Panc1 (cell line): ENCODE measurements at regions of chr17 and their contacts with region 1.

Region 1: DNA sequence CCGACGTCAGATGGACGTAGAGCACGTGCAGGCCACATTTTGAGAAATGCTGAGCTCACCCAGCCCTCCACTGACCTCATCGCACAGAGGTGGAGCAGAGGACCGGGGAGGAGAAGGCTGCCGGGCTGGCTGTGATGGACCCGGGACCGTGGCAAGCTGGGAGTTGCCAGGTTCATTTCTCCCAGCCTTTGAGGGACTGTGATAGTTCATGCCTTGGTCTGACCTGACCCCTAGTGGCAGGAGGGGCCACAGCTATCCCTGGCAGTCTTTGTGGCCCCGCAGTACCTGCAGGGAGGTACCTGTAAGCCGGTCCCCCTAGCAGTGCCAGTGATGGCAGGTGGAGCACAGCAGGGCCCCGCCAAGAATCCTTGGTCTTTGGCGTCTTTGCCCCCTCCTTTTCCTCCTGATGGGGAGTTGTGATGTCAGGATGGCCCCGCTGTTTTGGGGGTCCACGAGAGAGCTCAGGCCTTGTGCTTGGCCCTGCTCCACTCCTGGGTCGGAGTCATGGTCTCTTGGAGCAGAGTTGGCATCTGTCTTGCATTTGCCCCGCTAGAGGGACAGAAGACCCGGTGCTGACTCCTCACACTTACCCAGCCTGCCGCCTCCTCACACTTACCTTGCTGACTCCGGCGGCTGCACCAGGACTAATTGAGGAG is 50.4 kb downstream of the OR1D5 start:
- DNase-seq: peak; percentile 45
- ATAC-seq: peak; percentile 97
- H3K4me3 ChIP-seq: no peak overlapping the region
- H3K27ac ChIP-seq: no peak overlapping the region
- H3K4me1 ChIP-seq: no peaks in the 10 kb centered on the region
- H3K27me3 ChIP-seq: no peaks in the 10 kb centered on the region
- CTCF ChIP-seq: peak; percentile 87

Region 2: GRCh38 chr17:2712300-2713043 is 300.6 kb before region 1 on chr17:
- CTCF ChIA-PET with region 1: interaction called, 13 read pairs
- POLR2A ChIA-PET with region 1: no interaction called
- in situ Hi-C with region 1: no loop called
- intact Hi-C with region 1: no loop called
- DNase-seq: no peak
- ATAC-seq: peak; percentile 9; the same call in 1 of the 2 replicates
- H3K4me3 ChIP-seq: peak overlapping the region; percentile 69 to 82
- H3K27ac ChIP-seq: peak overlapping the region; percentile 92
- H3K4me1 ChIP-seq: peaks cover 24% of the 10 kb centered on the region
- H3K27me3 ChIP-seq: no peaks in the 10 kb centered on the region
- CTCF ChIP-seq: no peak

Region 3: DNA sequence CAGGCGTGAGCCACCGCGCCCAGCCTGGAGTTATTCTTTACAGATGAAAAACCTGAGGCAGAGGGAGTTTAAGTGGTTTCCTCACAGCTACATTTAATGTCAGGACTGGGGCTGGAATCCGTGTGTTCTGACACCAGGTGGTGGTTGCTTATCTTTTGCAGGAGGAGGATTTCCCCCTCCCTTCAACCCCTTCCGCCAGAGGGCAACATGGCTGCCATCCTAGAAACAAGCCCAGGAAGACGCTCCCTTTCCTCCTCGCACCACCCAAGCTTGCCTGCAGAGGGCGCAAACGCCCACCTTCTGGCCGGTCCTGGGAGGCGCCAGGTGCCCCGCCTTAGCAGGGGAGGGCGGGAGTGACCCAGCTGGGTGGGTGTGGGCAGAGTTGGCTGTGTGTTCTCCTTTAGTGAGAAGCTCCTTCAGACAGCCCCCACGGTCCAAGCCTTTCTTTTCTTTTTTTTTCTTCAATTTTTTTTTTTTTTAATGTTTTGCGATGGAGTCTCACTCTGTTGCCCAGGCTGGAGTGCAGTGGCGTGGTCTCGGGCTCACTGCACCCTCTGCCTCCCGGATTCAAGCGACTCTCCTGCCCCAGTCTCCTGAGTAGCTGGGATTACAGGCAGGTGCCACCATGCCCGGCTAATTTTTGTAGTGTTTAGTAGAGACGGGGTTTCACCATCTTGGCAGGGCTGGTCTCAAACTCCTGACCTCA is 226.7 kb before region 1 on chr17:
- CTCF ChIA-PET with region 1: interaction called, 13 read pairs
- POLR2A ChIA-PET with region 1: no interaction called
- in situ Hi-C with region 1: no loop called
- intact Hi-C with region 1: no loop called
- DNase-seq: peak; percentile 85
- ATAC-seq: peak; percentile 97
- H3K4me3 ChIP-seq: peak overlapping the region in 1 of 2 experiments; percentile 6; a peak in 1 of 4 replicates
- H3K27ac ChIP-seq: no peak overlapping the region
- H3K4me1 ChIP-seq: no peaks in the 10 kb centered on the region
- H3K27me3 ChIP-seq: no peaks in the 10 kb centered on the region
- CTCF ChIP-seq: peak; percentile 96

Region 4: GRCh38 chr17:2828397-2829038 is 184.5 kb before region 1 on chr17:
- CTCF ChIA-PET with region 1: interaction called, 5 read pairs
- POLR2A ChIA-PET with region 1: no interaction called
- in situ Hi-C with region 1: no loop called
- intact Hi-C with region 1: loop called (anchors 5 kb)
- DNase-seq: no peak
- ATAC-seq: peak; percentile 91
- H3K4me3 ChIP-seq: no peak overlapping the region
- H3K27ac ChIP-seq: no peak overlapping the region
- H3K4me1 ChIP-seq: no peaks in the 10 kb centered on the region
- H3K27me3 ChIP-seq: no peaks in the 10 kb centered on the region
- CTCF ChIP-seq: peak; percentile 94

Region 5: GRCh38 chr17:2844416-2844815 is 168.6 kb before region 1 on chr17:
- CTCF ChIA-PET with region 1: interaction called, 23 read pairs
- POLR2A ChIA-PET with region 1: no interaction called
- in situ Hi-C with region 1: no loop called
- intact Hi-C with region 1: loop called (anchors 2 kb)
- DNase-seq: no peak
- ATAC-seq: no peak; the same call in 1 of the 2 replicates
- H3K4me3 ChIP-seq: no peak overlapping the region
- H3K27ac ChIP-seq: no peak overlapping the region
- H3K4me1 ChIP-seq: no peaks in the 10 kb centered on the region; the same call in 1 of the 2 replicates
- H3K27me3 ChIP-seq: no peaks in the 10 kb centered on the region
- CTCF ChIP-seq: no peak

Region 6: DNA sequence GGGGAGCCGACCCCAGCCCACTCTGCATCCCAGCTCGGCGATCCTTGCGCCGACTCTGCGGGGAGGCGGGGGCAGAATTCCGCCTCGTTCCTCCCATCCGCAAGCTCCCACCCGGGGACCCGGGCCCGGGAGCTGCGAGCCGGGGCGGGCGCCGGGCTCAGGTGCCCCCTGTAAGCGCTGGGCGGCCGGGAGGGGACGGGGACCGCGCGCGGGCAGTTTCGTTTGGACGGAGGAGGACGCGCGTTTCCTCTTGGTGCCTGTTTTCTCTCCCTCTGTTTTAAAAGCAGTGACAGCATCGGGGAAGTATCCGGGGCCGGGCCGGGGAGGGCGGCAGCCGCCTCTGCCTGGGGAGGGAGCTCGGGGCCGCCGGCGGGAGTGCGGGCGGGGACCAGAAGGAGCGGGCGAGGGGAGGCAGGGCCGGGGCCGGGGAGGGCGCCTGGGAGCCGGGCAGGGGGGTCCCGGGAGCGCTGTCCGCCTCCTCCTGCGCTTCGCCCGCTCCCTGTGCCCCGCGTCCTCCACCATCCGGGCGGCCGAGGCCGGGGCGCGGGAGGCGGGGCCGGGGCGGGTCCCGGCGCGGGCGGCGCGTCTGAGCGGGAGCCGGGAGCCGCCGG is 159.8 kb before region 1 on chr17:
- CTCF ChIA-PET with region 1: interaction called, 23 read pairs
- POLR2A ChIA-PET with region 1: interaction called, 12 read pairs
- in situ Hi-C with region 1: no loop called
- intact Hi-C with region 1: loop called (anchors 2 kb)
- DNase-seq: no peak
- ATAC-seq: peak; percentile 82
- H3K4me3 ChIP-seq: peak overlapping the region; percentile 34 to 52; a peak in 3 of 4 replicates
- H3K27ac ChIP-seq: no peak overlapping the region
- H3K4me1 ChIP-seq: no peaks in the 10 kb centered on the region; the same call in 1 of the 2 replicates
- H3K27me3 ChIP-seq: no peaks in the 10 kb centered on the region; the same call in 1 of the 2 replicates
- CTCF ChIP-seq: no peak

Region 7: GRCh38 chr17:2943981-2944380 is 69.1 kb before region 1 on chr17:
- CTCF ChIA-PET with region 1: no interaction called
- POLR2A ChIA-PET with region 1: no interaction called
- in situ Hi-C with region 1: no loop called
- intact Hi-C with region 1: no loop called
- DNase-seq: no peak
- ATAC-seq: no peak
- H3K4me3 ChIP-seq: no peak overlapping the region
- H3K27ac ChIP-seq: no peak overlapping the region
- H3K4me1 ChIP-seq: no peaks in the 10 kb centered on the region
- H3K27me3 ChIP-seq: no peaks in the 10 kb centered on the region
- CTCF ChIP-seq: no peak